ENCODE measurements at regions of chr10 and their contacts with region 1.

Region 1: DNA sequence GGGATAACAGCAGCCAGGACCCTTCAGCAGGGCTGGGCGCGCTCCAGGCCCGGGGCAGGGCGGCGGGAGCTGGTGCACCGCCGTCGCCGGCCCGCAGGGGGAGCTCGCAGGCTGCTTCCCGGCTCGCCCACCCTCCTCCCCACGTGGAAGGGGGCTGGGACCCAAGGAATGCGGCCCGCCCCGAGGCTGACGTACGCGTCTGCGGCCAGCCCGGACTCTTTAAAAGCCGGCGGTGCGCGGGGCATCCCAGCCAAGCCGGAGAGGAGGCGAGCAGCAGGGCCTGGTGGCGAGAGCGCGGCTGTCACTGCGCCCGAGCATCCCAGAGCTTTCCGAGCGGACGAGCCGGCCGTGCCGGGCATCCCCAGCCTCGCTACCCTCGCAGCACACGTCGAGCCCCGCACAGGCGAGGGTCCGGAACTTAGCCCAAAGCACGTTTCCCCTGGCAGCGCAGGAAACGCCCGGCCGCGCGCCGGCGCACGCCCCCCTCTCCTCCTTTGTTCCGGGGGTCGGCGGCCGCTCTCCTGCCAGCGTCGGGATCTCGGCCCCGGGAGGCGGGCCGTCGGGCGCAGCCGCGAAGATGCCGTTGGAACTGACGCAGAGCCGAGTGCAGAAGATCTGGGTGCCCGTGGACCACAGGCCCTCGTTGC is at the start of gene PFKFB3:
- DNase-seq: peak; percentile 98
- H3K4me3 ChIP-seq: peak within 1 kb of the TSS; percentile 53 to 97 (median 77)
- H3K27ac ChIP-seq: peak within 1 kb of the TSS; percentile 68 to 99 (median 95)
- H3K4me1 ChIP-seq: peaks cover 20 to 79% (median 46%) of the 10 kb centered on the region in 6 donors
- H3K27me3 ChIP-seq: no peaks in the 10 kb centered on the region
- CTCF ChIP-seq: peak; percentile 97 to 100 (median 99)
- POLR2A ChIP-seq: peak; percentile 84 to 95 (median 93)
- total RNA-seq, gene PFKFB3: 74.2 to 227 (median 145) TPM

Region 2: GRCh38 chr10:6401562-6402348 is 198.9 kb after region 1 on chr10:
- intact Hi-C with region 1: loop called (anchors 2 kb)
- DNase-seq: peak; percentile 85
- H3K4me3 ChIP-seq: peak overlapping the region in 5 of 8 donors; percentile 2 to 48 (median 11)
- H3K27ac ChIP-seq: peak overlapping the region in 7 of 8 donors; percentile 33 to 89 (median 83)
- H3K4me1 ChIP-seq: peaks cover 5 to 53% (median 28%) of the 10 kb centered on the region in 6 donors
- H3K27me3 ChIP-seq: no peaks in the 10 kb centered on the region
- CTCF ChIP-seq: peak; percentile 71 to 92 (median 84)
- POLR2A ChIP-seq: no peak

Measured in spleen (tissue), 13 donors.